ENCODE measurements at regions of chr5 and their contacts with region 1.

Region 1: GRCh38 chr5:68215208-68215897 is at the start of gene PIK3R1:
- DNase-seq: peak; percentile 81 to 97
- H3K4me3 ChIP-seq: peak within 1 kb of the TSS; percentile 91 to 99
- H3K27ac ChIP-seq: peak within 1 kb of the TSS; percentile 96
- H3K4me1 ChIP-seq: peaks cover 0 to 5% of the 10 kb centered on the region in 2 donors
- H3K27me3 ChIP-seq: no peaks in the 10 kb centered on the region
- CTCF ChIP-seq: peak; percentile 45 to 51 (median 46)
- total RNA-seq, gene PIK3R1: 89.3 TPM

Region 2: DNA sequence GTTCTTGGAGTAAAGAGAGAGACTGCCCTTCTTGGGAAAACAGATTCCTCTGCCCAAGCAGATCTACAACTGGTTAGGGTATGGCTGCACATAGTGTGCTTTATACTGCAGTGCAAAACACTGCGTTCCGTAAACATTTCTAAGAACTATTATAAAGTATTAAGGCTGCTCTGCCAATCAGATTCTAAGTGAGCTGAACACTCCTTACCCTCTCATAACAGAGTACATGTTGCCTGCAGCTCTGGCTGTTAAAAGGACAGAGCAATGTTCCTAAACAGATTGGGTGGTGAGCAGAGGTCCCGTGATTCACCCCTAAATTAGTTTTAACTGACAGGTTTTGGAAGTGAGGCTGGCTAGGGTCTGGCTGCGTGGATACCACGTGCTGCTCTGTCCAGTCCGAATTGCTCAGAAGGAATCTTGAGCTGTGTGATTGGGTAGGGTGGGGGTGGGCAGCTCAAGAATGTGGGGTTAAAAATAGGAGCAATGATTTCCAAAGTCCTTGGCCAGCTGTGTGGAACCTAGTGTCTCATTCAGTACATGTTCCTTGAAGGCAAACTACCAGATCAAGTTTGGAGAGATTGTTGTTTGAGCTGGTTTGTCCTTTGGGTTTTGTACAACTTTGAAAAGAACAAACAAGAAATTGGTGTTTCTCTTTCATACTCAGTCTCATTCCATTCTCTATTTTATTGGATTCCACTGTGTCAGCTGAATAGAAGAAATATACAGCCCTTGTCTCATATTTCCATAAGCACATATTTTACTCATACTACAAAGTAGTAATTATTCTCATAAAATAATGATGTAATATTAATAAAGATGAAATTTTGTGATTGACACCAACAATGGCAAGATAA is 521.2 kb before region 1 on chr5:
- intact Hi-C with region 1: loop called (anchors 2 kb)
- DNase-seq: peak; percentile 74 to 96
- H3K4me3 ChIP-seq: no peak overlapping the region
- H3K27ac ChIP-seq: peak overlapping the region; percentile 73 to 76
- H3K4me1 ChIP-seq: peaks cover 0 to 24% of the 10 kb centered on the region in 2 donors
- H3K27me3 ChIP-seq: no peaks in the 10 kb centered on the region
- CTCF ChIP-seq: no peak

Region 3: GRCh38 chr5:68170826-68171558 is 44.4 kb before region 1 on chr5:
- intact Hi-C with region 1: loop called (anchors 2 kb)
- DNase-seq: peak; percentile 59 to 90
- H3K4me3 ChIP-seq: peak overlapping the region in 1 of 2 donors; percentile 25
- H3K27ac ChIP-seq: peak overlapping the region; percentile 70 to 79
- H3K4me1 ChIP-seq: peaks cover 3 to 19% of the 10 kb centered on the region in 2 donors
- H3K27me3 ChIP-seq: no peaks in the 10 kb centered on the region
- CTCF ChIP-seq: no peak

Region 4: DNA sequence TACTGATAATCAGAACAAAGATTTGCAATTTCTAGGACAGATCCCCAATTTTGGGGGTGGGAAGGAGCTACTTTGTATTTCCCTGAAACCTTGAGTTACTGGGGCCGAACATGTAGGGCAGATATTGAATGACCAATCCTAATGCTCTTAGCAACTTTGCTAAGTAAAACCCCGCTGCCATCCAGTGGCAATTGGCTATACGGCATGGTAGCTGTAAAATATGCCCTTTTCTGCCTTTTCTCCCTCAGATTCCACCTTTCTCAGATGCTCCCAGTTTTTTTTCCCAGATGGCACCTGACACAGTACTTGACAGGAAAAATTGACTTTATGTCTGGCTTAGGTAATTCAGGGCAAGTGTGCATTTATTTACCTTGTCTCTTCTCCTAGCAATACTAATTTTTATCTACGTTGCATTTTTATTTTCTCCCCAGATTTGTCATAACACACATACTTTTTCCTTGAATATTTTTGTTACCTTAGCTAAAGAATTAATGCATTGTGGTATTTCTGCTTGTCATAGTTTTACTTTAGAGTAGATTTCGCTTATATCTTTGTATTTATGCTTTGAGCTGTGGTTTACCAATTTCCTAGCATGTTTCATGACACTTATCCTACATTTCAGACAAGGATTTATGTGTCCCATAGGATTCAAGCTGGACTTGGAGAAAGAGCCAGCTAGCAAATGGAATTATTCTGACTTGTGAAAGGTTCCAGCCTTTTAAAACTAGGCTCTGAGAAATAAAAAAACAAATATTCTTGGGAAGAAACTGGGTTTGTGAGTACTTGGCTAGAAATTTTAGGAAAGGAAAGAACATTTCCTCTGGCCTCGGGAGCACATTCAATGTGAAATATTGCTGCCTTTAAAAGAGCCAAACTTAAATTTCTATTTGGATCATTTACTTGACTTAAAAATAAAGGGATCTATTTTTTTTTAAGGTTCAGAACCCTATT is 37.6 kb after region 1 on chr5:
- intact Hi-C with region 1: loop called (anchors 1 kb)
- DNase-seq: peak in 1 of 2 donors; percentile 77
- H3K4me3 ChIP-seq: peak overlapping the region; percentile 17 to 37
- H3K27ac ChIP-seq: peak overlapping the region; percentile 66 to 77
- H3K4me1 ChIP-seq: peaks cover 15 to 85% of the 10 kb centered on the region in 2 donors
- H3K27me3 ChIP-seq: no peaks in the 10 kb centered on the region
- CTCF ChIP-seq: peak; percentile 69 to 84 (median 70)

Region 5: GRCh38 chr5:68565427-68565826 is 350.1 kb after region 1 on chr5:
- intact Hi-C with region 1: no loop called
- DNase-seq: no peak
- H3K4me3 ChIP-seq: no peak overlapping the region
- H3K27ac ChIP-seq: no peak overlapping the region
- H3K4me1 ChIP-seq: no peaks in the 10 kb centered on the region
- H3K27me3 ChIP-seq: no peaks in the 10 kb centered on the region
- CTCF ChIP-seq: no peak

Measured in ascending aorta (tissue), 2 donors.